PC-9 (cell line): ENCODE measurements at regions of chr17 and their contacts with region 1.

Region 1: DNA sequence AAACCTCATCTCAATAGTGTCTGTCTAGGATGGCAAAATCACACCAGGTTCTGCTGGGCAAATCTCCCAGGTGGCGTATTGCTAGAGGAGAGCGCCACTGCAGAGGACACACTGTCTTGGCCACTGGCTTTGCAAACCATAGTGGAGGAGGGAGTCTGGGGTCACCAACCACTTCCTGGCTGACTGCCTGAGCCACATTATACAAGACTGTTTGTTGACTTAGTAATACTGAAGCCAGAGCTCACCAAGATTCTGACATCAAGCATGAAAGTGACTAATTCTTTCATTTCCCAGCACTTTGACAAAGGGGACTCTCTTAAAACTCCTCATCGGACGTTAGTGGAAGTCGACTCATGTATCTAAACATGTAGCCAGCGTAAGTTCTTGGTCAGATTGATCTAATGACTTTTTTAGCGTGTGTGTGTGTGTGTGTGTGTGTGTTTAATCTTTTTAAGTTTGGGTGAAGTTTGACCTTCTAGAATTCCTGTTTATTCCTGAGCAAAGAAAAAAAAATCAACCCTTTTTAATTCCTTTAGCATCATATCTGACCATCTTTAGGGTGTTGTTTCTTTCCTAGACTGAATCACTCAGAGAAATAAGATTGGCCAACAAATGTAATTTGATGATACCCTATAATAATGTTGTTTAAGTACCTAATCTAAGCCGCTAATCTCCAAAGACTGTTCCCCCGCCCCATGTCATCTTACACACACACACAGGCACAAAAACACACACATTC is 13.7 kb downstream of the PITPNC1 start:
- DNase-seq: peak; percentile 61 to 95
- H3K4me3 ChIP-seq: peak overlapping the region; percentile 33; the same call in 1 of the 2 replicates
- H3K27ac ChIP-seq: peak overlapping the region; percentile 81
- H3K4me1 ChIP-seq: peaks cover 28% of the 10 kb centered on the region
- H3K27me3 ChIP-seq: no peaks in the 10 kb centered on the region
- CTCF ChIP-seq: no peak

Region 2: GRCh38 chr17:67421869-67422273 is 31.1 kb after region 1 on chr17:
- CTCF ChIA-PET with region 1: interaction called, 3 read pairs
- POLR2A ChIA-PET with region 1: no interaction called
- intact Hi-C with region 1: loop called (anchors 2 kb)
- DNase-seq: peak; percentile 70 to 100
- H3K4me3 ChIP-seq: no peak overlapping the region
- H3K27ac ChIP-seq: peak overlapping the region; percentile 93
- H3K4me1 ChIP-seq: peaks cover 22% of the 10 kb centered on the region
- H3K27me3 ChIP-seq: no peaks in the 10 kb centered on the region
- CTCF ChIP-seq: no peak

Region 3: GRCh38 chr17:67475236-67475937 is 84.6 kb after region 1 on chr17:
- CTCF ChIA-PET with region 1: interaction called, 6 read pairs
- POLR2A ChIA-PET with region 1: no interaction called
- intact Hi-C with region 1: loop called (anchors 1 kb)
- DNase-seq: peak; percentile 53 to 67
- H3K4me3 ChIP-seq: no peak overlapping the region
- H3K27ac ChIP-seq: no peak overlapping the region
- H3K4me1 ChIP-seq: no peaks in the 10 kb centered on the region
- H3K27me3 ChIP-seq: no peaks in the 10 kb centered on the region
- CTCF ChIP-seq: peak; percentile 92

Region 4: DNA sequence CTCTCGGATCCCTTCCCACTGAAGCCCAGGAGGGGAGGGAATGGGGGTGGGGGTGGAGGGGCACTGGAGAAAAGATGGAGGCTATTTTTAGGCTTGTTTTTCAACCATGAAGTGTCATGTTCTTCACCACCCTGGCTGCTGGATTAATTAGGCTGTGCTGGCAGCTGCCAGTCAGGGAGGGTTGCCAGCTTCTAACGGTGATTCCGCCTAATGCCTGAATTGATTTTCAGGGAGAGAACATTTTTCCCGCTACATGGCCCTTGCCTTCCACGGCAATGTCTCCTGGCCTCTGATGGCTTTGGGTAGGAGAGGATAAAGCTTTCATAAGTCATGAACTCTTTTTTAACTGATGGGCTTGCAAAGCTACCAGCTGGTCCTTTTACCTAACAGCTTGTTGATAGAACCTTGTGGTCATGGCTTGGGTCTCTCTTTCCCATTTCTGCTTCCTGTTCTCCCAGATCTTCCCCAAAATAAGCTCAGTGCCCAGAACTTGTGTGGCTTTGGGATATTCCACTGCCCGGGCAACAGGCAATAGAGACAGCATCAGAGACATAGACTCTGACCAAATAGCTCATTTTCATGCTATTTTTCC is 153.6 kb after region 1 on chr17:
- CTCF ChIA-PET with region 1: interaction called, 10 read pairs
- POLR2A ChIA-PET with region 1: no interaction called
- intact Hi-C with region 1: no loop called
- DNase-seq: no peak
- H3K4me3 ChIP-seq: no peak overlapping the region
- H3K27ac ChIP-seq: no peak overlapping the region
- H3K4me1 ChIP-seq: no peaks in the 10 kb centered on the region
- H3K27me3 ChIP-seq: no peaks in the 10 kb centered on the region
- CTCF ChIP-seq: no peak

Region 5: DNA sequence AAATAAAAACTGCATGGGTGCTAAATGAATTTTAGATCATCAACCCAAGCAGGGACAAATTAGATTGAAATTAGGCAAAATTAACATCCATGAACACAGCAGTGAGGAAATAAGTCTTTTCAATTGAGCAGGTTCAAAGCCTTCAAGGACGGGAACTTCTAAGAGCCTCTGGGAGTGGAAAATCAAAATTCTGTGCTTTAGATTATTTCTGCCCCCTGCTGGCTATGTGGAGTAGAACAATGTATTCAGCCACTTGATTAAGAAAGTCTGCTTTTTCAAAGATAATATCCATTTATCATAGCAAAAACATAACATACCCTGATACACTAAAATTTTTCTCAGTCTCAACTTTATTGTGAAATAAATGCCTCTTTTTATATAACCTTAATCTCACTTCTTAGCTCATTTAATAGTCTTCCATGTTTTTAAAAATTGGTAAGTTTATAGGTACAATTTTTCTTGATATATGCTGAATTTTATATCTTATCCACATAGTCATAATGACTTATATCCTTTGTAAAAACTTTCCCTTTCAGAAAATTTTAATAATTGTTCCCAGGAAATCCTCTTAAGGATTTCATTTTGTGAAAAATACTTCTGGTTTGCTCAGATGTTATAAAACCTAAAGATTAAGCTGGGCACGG is 298.8 kb after region 1 on chr17:
- CTCF ChIA-PET with region 1: no interaction called
- POLR2A ChIA-PET with region 1: no interaction called
- intact Hi-C with region 1: loop called (anchors 1 kb)
- DNase-seq: peak; percentile 24 to 51
- H3K4me3 ChIP-seq: no peak overlapping the region
- H3K27ac ChIP-seq: no peak overlapping the region
- H3K4me1 ChIP-seq: no peaks in the 10 kb centered on the region
- H3K27me3 ChIP-seq: no peaks in the 10 kb centered on the region
- CTCF ChIP-seq: peak; percentile 88